Activated CD4-positive, alpha-beta T cell treated with anti-CD3 and anti-CD28 coated beads for 36 hours (primary cell): ENCODE measurements at regions of chr11 and their contacts with region 1.

Region 1: GRCh38 chr11:3091791-3092602 is 34.8 kb upstream of the CARS1 start:
- DNase-seq: peak; percentile 84
- ATAC-seq: peak; percentile 88
- H3K4me3 Mint-ChIP-seq: no peak overlapping the region
- H3K27ac Mint-ChIP-seq: no peak overlapping the region
- H3K4me1 Mint-ChIP-seq: no peaks in the 10 kb centered on the region
- H3K27me3 Mint-ChIP-seq: no peaks in the 10 kb centered on the region

Region 2: GRCh38 chr11:2428322-2428795 is 663.6 kb before region 1 on chr11:
- CTCF ChIA-PET with region 1: no interaction called
- POLR2A ChIA-PET with region 1: no interaction called
- intact Hi-C with region 1: loop called in 1 of 2 experiments (anchors 1 kb)
- DNase-seq: peak; percentile 93
- ATAC-seq: peak; percentile 96
- H3K4me3 Mint-ChIP-seq: no peak overlapping the region
- H3K27ac Mint-ChIP-seq: no peak overlapping the region
- H3K4me1 Mint-ChIP-seq: no peaks in the 10 kb centered on the region
- H3K27me3 Mint-ChIP-seq: no peaks in the 10 kb centered on the region

Region 3: GRCh38 chr11:2892215-2893020 is 199.6 kb before region 1 on chr11:
- CTCF ChIA-PET with region 1: interaction called, 9 read pairs
- POLR2A ChIA-PET with region 1: no interaction called
- intact Hi-C with region 1: loop called in 1 of 2 experiments (anchors 2 kb)
- DNase-seq: peak; percentile 85
- ATAC-seq: peak; percentile 69
- H3K4me3 Mint-ChIP-seq: peak overlapping the region; percentile 75
- H3K27ac Mint-ChIP-seq: peak overlapping the region; percentile 80
- H3K4me1 Mint-ChIP-seq: peaks cover 18% of the 10 kb centered on the region
- H3K27me3 Mint-ChIP-seq: no peaks in the 10 kb centered on the region

Region 4: GRCh38 chr11:2975594-2975993 is 116.4 kb before region 1 on chr11:
- CTCF ChIA-PET with region 1: interaction called, 6 read pairs
- POLR2A ChIA-PET with region 1: no interaction called
- intact Hi-C with region 1: loop called in 1 of 2 experiments (anchors 1 kb)
- DNase-seq: peak; percentile 67
- ATAC-seq: peak; percentile 95
- H3K4me3 Mint-ChIP-seq: no peak overlapping the region
- H3K27ac Mint-ChIP-seq: no peak overlapping the region
- H3K4me1 Mint-ChIP-seq: peaks cover 27% of the 10 kb centered on the region
- H3K27me3 Mint-ChIP-seq: no peaks in the 10 kb centered on the region

Region 5: GRCh38 chr11:3037040-3037944 is 54.7 kb before region 1 on chr11:
- CTCF ChIA-PET with region 1: interaction called, 35 read pairs
- POLR2A ChIA-PET with region 1: no interaction called
- intact Hi-C with region 1: loop called (anchors 1 to 5 kb)
- DNase-seq: peak; percentile 71
- ATAC-seq: peak; percentile 87
- H3K4me3 Mint-ChIP-seq: no peak overlapping the region
- H3K27ac Mint-ChIP-seq: no peak overlapping the region
- H3K4me1 Mint-ChIP-seq: peaks cover 23% of the 10 kb centered on the region
- H3K27me3 Mint-ChIP-seq: no peaks in the 10 kb centered on the region